MCF 10A (cell line): ENCODE measurements at regions of chr3 and their contacts with region 1.

Region 1: GRCh38 chr3:183635431-183636220 is at the start of gene KLHL24:
- DNase-seq: peak; percentile 94
- H3K4me3 Mint-ChIP-seq: peak within 1 kb of the TSS; percentile 86
- H3K27ac Mint-ChIP-seq: peak within 1 kb of the TSS; percentile 93
- H3K4me1 Mint-ChIP-seq: no peaks in the 10 kb centered on the region
- H3K27me3 Mint-ChIP-seq: no peaks in the 10 kb centered on the region
- CTCF ChIP-seq: no peak
- total RNA-seq, gene KLHL24: 13.0 and 17.3 TPM in 2 replicates

Region 2: DNA sequence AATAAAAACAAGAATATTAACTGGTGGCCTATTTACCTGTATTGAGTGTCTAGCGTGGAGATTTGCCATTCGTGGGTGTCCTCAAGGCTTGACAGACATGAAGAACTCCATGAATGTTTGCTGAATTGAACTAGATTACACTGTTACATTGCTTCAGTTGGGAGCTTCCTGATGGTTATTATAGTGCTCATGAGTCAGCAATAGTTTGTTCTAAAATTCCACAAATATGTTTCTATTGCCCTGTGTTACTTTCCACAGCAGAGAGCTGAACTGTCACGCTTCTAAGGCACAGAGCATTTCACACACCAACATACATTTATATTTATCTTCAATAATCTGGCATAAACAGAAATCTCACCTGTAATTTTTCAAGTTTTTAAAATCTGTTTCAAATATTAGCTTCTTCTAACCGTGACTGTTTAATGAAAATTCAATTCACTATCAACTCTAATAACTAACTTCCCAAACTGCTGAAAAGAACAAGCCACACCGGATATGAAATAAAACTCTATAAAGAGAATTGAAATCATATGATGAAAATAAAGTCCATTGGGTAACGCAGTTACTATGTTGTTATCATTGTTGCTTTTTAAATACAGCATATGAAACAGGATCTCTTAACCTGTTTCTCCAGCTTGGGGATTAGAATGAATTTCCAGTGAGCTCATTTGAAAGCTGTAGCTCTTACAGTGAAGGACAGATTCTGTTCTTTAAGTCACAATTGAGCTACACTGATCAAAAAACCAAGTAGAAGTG is 146.0 kb before region 1 on chr3:
- CTCF ChIA-PET with region 1: no interaction called
- POLR2A ChIA-PET with region 1: interaction called, 3 read pairs
- intact Hi-C with region 1: loop called (anchors 10 kb)
- DNase-seq: no peak
- H3K4me3 Mint-ChIP-seq: no peak overlapping the region
- H3K27ac Mint-ChIP-seq: no peak overlapping the region
- H3K4me1 Mint-ChIP-seq: peaks cover 7% of the 10 kb centered on the region
- H3K27me3 Mint-ChIP-seq: peaks cover 16% of the 10 kb centered on the region
- CTCF ChIP-seq: no peak

Region 3: DNA sequence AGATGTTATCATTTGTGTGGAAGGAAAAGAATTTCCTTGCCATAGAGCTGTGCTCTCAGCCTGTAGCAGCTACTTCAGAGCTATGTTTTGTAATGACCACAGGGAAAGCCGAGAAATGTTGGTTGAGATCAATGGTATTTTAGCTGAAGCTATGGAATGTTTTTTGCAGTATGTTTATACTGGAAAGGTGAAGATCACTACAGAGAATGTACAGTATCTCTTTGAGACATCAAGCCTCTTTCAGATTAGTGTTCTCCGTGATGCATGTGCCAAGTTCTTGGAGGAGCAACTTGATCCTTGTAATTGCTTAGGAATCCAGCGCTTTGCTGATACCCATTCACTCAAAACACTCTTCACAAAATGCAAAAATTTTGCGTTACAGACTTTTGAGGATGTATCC is 14.9 kb after region 1 on chr3:
- CTCF ChIA-PET with region 1: interaction called, 3 read pairs
- POLR2A ChIA-PET with region 1: interaction called, 56 read pairs
- intact Hi-C with region 1: no loop called
- DNase-seq: no peak
- H3K4me3 Mint-ChIP-seq: no peak overlapping the region
- H3K27ac Mint-ChIP-seq: no peak overlapping the region
- H3K4me1 Mint-ChIP-seq: no peaks in the 10 kb centered on the region
- H3K27me3 Mint-ChIP-seq: no peaks in the 10 kb centered on the region
- CTCF ChIP-seq: no peak

Region 4: DNA sequence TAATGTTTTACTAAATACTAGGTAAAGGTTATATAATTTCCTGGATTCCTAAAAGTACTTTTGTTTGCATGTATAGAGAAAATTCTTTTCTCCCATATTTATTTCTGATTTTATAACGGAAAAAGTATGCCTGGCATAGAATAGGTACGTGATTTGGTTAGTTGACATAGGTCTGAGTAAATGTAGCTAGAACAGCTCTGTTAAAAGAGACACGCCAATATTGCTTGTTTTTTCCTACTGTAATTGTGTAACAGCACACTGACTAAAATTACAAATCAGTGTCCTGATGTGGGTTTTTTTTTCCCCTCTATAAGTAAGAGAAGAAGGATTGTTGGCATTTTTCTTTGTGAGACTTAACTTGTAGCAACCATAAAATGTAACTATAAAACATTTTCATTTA is 26.5 kb after region 1 on chr3:
- CTCF ChIA-PET with region 1: interaction called, 3 read pairs
- POLR2A ChIA-PET with region 1: interaction called, 12 read pairs
- intact Hi-C with region 1: no loop called
- DNase-seq: no peak
- H3K4me3 Mint-ChIP-seq: no peak overlapping the region
- H3K27ac Mint-ChIP-seq: no peak overlapping the region
- H3K4me1 Mint-ChIP-seq: peaks cover 8% of the 10 kb centered on the region
- H3K27me3 Mint-ChIP-seq: no peaks in the 10 kb centered on the region
- CTCF ChIP-seq: no peak

Region 5: GRCh38 chr3:183697610-183698317 is 62.1 kb after region 1 on chr3 and contains the start of gene YEATS2:
- CTCF ChIA-PET with region 1: no interaction called
- POLR2A ChIA-PET with region 1: interaction called, 98 read pairs
- intact Hi-C with region 1: loop called (anchors 1 kb)
- DNase-seq: peak; percentile 63
- H3K4me3 Mint-ChIP-seq: peak within 1 kb of the TSS; percentile 77
- H3K27ac Mint-ChIP-seq: peak within 1 kb of the TSS; percentile 87
- H3K4me1 Mint-ChIP-seq: peaks cover 24% of the 10 kb centered on the region
- H3K27me3 Mint-ChIP-seq: no peaks in the 10 kb centered on the region
- CTCF ChIP-seq: no peak
- total RNA-seq, gene YEATS2: 24.7 and 29.4 TPM in 2 replicates